Heart right ventricle (tissue), 16 donors: ENCODE measurements at regions of chr7 and their contacts with region 1.

Region 1: DNA sequence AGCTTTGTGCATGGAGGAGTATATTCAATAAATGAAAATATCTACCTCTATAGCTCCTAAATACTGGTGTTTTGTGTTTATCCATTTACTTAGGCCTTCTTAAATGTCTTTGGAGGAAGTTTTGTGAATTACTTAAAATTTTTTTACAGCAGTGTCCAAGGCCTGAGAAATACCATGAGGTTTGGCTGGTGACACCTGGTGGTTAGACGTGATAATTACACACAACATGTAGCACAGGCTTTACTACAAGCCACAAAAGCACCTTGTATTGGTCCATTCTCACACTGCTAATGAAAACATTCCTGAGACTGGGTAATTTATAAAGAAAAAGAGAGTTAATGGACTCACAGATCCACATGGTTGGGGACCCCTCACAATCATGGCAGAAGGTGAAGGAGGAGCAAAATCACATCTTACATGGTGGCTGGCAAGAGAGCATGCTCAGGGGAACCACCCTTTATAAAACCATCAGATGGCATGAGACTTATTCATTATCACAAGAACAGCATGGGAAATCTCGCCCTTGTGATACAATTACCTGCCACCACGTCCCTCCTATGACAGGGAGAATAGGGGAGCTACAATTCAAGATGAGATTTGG is 20.6 kb downstream of the HYAL4 start:
- DNase-seq: peak in 1 of 2 donors; percentile 51
- ATAC-seq: peak; percentile 67 to 88 (median 78)
- H3K4me3 ChIP-seq: no peak overlapping the region
- H3K27ac ChIP-seq: no peak overlapping the region
- H3K4me1 ChIP-seq: peaks cover 0 to 14% (median 3%) of the 10 kb centered on the region in 9 donors
- H3K27me3 ChIP-seq: no peaks in the 10 kb centered on the region
- CTCF ChIP-seq: peak; percentile 73 to 85 (median 77)

Region 2: DNA sequence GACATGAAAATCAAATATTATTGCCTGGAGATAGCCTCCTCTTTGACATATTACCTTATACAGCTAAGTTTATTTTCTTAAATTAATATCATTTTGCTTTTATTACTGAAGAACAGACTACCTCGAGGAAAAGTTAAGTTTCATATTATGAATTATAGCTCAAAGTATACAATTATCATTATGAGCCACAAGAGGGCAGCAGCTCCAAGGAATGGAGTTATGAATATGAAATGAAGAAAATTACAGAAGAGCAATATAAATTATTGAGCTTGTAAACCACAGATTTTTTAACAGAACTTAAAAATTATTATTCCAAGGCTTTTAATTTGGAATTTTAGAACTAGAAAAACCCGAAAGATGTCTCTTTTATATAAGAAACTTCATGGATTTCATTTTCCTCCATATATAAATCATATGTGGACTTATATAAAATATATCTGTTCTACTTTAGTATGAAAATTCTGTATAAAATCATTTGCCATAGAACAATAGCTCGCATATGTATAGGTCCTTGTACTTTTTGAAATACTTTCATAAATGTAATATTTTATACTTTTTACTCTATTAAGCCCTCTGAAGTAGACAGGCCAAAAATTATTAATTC is 371.3 kb before region 1 on chr7:
- intact Hi-C with region 1: loop called in 9 of 10 experiments (anchors 5 to 10 kb)
- DNase-seq: peak in 1 of 2 donors; percentile 26
- ATAC-seq: no peak
- H3K4me3 ChIP-seq: no peak overlapping the region
- H3K27ac ChIP-seq: no peak overlapping the region
- H3K4me1 ChIP-seq: peaks cover 0 to 6% (median 0%) of the 10 kb centered on the region in 9 donors
- H3K27me3 ChIP-seq: no peaks in the 10 kb centered on the region
- CTCF ChIP-seq: peak; percentile 49 to 90 (median 82)

Region 3: GRCh38 chr7:123580406-123581161 is 285.0 kb before region 1 on chr7:
- intact Hi-C with region 1: loop called in 6 of 10 experiments (anchors 2 to 10 kb)
- DNase-seq: peak in 1 of 2 donors; percentile 26
- ATAC-seq: peak; percentile 43 to 82 (median 76)
- H3K4me3 ChIP-seq: no peak overlapping the region
- H3K27ac ChIP-seq: peak overlapping the region in 1 of 10 donors; percentile 12
- H3K4me1 ChIP-seq: peaks cover 0 to 5% (median 0%) of the 10 kb centered on the region in 9 donors
- H3K27me3 ChIP-seq: no peaks in the 10 kb centered on the region
- CTCF ChIP-seq: peak; percentile 34 to 77 (median 64)

Region 4: DNA sequence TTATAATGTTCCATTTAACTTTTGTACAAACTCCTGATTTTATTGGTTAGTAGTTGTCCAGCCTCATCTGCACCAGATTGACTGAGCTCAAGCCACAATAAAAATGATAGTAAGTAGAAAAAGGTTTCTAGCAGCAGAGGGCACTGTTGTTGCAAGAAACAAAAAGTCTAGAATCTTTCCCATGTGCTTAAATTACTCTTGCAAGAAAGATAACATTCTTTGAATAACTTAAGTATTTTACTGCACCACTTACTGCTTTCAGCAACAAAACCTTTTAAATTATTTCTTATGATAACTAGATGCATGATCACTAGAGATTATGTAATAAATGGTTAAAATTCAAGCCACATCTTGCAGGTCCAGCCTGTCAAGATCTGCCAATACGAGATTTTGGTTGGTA is 182.9 kb before region 1 on chr7:
- intact Hi-C with region 1: loop called (anchors 2 to 10 kb)
- DNase-seq: no peak
- ATAC-seq: peak in 4 of 8 donors; percentile 36 to 59 (median 48)
- H3K4me3 ChIP-seq: no peak overlapping the region
- H3K27ac ChIP-seq: peak overlapping the region in 5 of 10 donors; percentile 15 to 75 (median 69)
- H3K4me1 ChIP-seq: peaks cover 0 to 48% (median 20%) of the 10 kb centered on the region in 9 donors
- H3K27me3 ChIP-seq: no peaks in the 10 kb centered on the region
- CTCF ChIP-seq: peak in 7 of 9 donors; percentile 53 to 73 (median 63)

Region 5: DNA sequence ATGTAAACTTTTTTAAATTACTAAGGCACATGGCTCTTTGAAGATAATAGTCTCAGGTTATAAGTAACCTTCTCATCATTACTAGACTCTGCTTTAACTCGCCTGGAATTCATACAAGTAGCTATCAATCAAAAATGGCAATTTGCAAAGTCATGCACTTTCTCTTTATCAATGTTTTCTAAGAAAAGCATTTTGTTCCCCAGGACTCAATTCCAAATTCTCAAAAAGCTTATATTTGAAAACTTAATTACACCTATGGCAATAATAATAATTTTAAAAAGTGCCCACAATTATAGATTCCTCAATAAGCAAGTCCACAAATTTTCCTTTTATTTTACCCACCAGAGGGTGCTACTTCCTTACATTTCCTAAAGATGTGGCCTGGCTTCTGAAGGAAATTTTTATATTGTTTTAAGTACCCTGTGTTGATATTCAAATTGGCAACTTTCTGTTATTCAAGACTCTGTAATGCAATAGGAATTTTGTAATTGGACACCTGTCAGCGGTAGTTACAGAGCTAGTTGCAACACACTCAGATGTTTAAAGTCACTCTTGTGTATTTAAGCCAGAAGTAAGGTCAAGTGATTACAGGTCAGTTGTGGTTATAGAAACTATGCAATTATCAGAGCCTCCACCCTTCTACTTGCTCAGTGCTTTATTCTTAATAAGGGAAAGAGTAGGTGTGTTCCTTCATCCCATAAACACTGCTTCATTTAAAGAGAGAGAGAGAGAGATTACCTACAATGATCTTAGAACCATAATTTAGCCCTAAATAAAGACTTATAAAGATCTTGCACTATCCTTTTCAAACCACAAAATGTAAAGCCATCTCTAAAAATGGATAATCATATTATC is 67.7 kb before region 1 on chr7:
- intact Hi-C with region 1: loop called (anchors 1 to 10 kb)
- DNase-seq: no peak
- ATAC-seq: peak in 7 of 8 donors; percentile 41 to 71 (median 55)
- H3K4me3 ChIP-seq: no peak overlapping the region
- H3K27ac ChIP-seq: no peak overlapping the region
- H3K4me1 ChIP-seq: peaks cover 0 to 4% (median 0%) of the 10 kb centered on the region in 9 donors
- H3K27me3 ChIP-seq: no peaks in the 10 kb centered on the region
- CTCF ChIP-seq: peak; percentile 20 to 75 (median 63)

Region 6: DNA sequence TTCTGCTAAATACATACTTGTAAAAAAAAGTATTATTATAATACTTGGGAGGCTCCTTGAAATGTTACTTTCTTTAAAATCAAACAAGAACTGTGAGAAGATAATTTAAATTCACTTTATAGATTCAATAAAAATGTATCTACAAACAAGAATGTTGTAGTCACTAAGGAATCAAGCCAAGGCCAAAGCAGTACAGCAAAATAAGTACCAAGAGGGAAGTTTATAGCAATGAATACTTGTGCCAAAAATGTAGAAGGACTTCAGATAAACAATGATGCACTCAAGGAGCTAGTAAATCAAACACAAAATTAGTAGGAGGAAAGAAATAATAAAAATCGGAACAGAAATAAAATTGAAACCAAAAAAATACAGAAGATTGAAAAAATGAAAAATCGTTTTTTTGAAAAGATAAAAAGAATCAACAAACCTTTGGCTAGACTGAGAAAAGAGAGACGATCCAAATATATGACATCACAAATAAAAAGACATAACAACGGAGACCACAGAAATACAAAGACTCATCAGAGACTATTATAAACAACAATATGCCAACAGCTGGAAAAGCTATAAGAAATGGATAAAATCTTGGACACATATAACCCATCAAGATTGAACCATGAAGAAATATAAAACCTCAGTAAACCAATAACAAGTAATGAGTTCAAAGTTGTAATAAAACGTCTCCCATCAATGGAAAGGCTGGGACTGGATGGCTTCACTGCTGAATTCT is 453.3 kb after region 1 on chr7:
- intact Hi-C with region 1: no loop called
- DNase-seq: no peak
- ATAC-seq: no peak
- H3K4me3 ChIP-seq: no peak overlapping the region
- H3K27ac ChIP-seq: no peak overlapping the region
- H3K4me1 ChIP-seq: no peaks in the 10 kb centered on the region
- H3K27me3 ChIP-seq: no peaks in the 10 kb centered on the region
- CTCF ChIP-seq: no peak